ENCODE measurements at regions of chr20 and their contacts with region 1.

Region 1: GRCh38 chr20:63537525-63538203 is 488 bp upstream of the PTK6 start:
- DNase-seq: peak; percentile 98
- ATAC-seq: peak; percentile 97
- H3K4me3 Mint-ChIP-seq: peak overlapping the region; percentile 44
- H3K27ac Mint-ChIP-seq: peak overlapping the region; percentile 88
- H3K4me1 Mint-ChIP-seq: peaks cover 17% of the 10 kb centered on the region
- H3K27me3 Mint-ChIP-seq: no peaks in the 10 kb centered on the region
- CTCF ChIP-seq: peak; percentile 96

Region 2: GRCh38 chr20:63520504-63520933 is 17.1 kb before region 1 on chr20 and contains the start of gene PPDPF:
- CTCF ChIA-PET with region 1: interaction called, 9 read pairs
- POLR2A ChIA-PET with region 1: interaction called, 48 read pairs
- intact Hi-C with region 1: no loop called
- DNase-seq: peak; percentile 85
- ATAC-seq: peak; percentile 88
- H3K4me3 Mint-ChIP-seq: peak within 1 kb of the TSS; percentile 78
- H3K27ac Mint-ChIP-seq: peak within 1 kb of the TSS; percentile 77
- H3K4me1 Mint-ChIP-seq: peaks cover 11% of the 10 kb centered on the region
- H3K27me3 Mint-ChIP-seq: no peaks in the 10 kb centered on the region
- CTCF ChIP-seq: no peak
- total RNA-seq, gene PPDPF: 193 to 226 TPM

Region 3: GRCh38 chr20:63553933-63554290 is 16.2 kb after region 1 on chr20 and contains the start of gene FNDC11:
- CTCF ChIA-PET with region 1: interaction called, 10 read pairs
- POLR2A ChIA-PET with region 1: interaction called, 4 read pairs
- intact Hi-C with region 1: no loop called
- DNase-seq: peak; percentile 68
- ATAC-seq: peak; percentile 11
- H3K4me3 Mint-ChIP-seq: peak within 1 kb of the TSS; percentile 53
- H3K27ac Mint-ChIP-seq: peak within 1 kb of the TSS; percentile 70
- H3K4me1 Mint-ChIP-seq: peaks cover 11% of the 10 kb centered on the region
- H3K27me3 Mint-ChIP-seq: peaks cover 7% of the 10 kb centered on the region
- CTCF ChIP-seq: no peak
- total RNA-seq, gene FNDC11: 0.23 to 0.27 TPM

Region 4: DNA sequence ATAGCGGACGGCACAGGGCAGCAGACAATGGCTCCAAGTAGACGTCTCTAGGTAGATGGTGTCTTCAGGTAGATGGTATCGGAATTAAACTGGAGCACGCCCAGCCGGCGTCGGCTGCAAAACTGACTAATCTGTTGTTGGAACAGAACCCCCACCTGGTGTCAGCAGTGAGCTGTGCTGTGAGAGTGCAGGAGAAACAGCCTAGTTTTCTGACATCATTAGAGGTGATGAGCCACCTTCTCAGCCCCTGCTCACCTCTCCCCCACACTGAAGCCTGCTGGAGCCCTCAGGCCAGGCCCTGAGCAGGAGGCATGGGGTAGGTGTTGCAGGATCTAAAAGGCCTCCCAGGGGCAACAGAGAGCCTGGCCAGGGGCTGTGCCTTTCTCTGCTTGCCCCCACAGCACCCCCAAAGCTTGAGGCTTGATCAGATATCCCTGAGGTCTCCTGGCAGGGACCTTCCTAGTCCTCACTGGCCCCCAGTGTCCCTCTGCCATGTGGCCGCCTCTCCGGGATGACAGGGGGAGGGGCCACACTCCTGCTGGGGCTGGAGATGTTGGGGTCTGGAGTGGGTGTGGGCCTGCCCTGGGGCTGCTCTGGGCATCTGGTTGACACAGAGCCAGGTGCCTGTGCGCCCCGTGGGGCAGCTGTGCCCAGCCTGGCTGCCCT is 43.3 kb after region 1 on chr20:
- CTCF ChIA-PET with region 1: interaction called, 11 read pairs
- POLR2A ChIA-PET with region 1: no interaction called
- intact Hi-C with region 1: no loop called
- DNase-seq: peak; percentile 83
- ATAC-seq: peak; percentile 98
- H3K4me3 Mint-ChIP-seq: no peak overlapping the region
- H3K27ac Mint-ChIP-seq: no peak overlapping the region
- H3K4me1 Mint-ChIP-seq: no peaks in the 10 kb centered on the region
- H3K27me3 Mint-ChIP-seq: peaks cover 3% of the 10 kb centered on the region
- CTCF ChIP-seq: peak; percentile 48

Region 5: DNA sequence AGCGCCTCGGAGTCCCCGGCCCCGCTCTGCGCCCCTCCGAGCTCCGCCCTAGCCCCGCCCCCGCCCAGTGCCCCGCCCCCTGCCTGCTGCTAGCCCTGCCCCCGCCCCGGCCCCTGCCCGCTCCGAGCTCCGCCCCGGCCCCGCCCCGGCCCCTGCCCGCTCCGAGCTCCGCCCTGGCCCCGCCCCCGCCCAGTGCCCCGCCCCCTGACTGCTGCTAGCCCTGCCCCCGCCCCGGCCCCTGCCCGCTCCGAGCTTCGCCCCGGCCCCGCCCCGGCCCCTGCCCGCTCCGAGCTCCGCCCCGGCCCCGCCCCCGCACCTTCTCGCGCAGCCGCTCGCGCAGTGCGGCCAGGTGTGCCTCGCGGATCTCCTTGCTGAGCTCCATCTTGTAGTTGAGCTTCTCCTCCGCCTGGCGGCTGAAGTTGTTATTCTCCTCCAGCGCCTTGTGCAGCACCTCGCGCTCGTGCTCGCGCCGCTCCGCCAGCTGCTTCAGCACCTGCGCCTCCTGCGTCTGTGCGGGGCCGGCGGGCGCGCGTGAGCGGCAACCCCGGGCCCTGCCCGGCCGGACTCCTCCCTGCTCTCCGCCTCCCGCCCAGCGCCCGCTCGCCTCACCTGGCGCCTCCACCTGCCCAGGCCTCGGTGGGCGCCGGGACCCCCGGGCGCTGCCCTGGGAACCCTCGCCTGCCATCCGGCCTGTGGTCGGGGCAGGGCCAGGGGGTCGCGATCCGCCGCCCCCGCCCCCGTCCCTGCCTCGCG is 104.3 kb after region 1 on chr20:
- CTCF ChIA-PET with region 1: interaction called, 20 read pairs
- POLR2A ChIA-PET with region 1: no interaction called
- intact Hi-C with region 1: no loop called
- DNase-seq: peak; percentile 95
- ATAC-seq: peak; percentile 71
- H3K4me3 Mint-ChIP-seq: peak overlapping the region; percentile 71
- H3K27ac Mint-ChIP-seq: no peak overlapping the region
- H3K4me1 Mint-ChIP-seq: peaks cover 21% of the 10 kb centered on the region
- H3K27me3 Mint-ChIP-seq: no peaks in the 10 kb centered on the region
- CTCF ChIP-seq: peak; percentile 57

Region 6: GRCh38 chr20:63657937-63658748 is 120.5 kb after region 1 on chr20 and contains the start of gene RTEL1:
- CTCF ChIA-PET with region 1: interaction called, 10 read pairs
- POLR2A ChIA-PET with region 1: no interaction called
- intact Hi-C with region 1: no loop called
- DNase-seq: peak; percentile 89
- ATAC-seq: peak; percentile 80
- H3K4me3 Mint-ChIP-seq: peak within 1 kb of the TSS; percentile 96
- H3K27ac Mint-ChIP-seq: peak within 1 kb of the TSS; percentile 93
- H3K4me1 Mint-ChIP-seq: peaks cover 24% of the 10 kb centered on the region
- H3K27me3 Mint-ChIP-seq: no peaks in the 10 kb centered on the region
- CTCF ChIP-seq: no peak
- total RNA-seq, gene RTEL1: 37.4 to 39.1 TPM

Region 7: GRCh38 chr20:63707549-63708300 is 170.1 kb after region 1 on chr20 and contains the starts of genes ARFRP1 and ZGPAT:
- CTCF ChIA-PET with region 1: interaction called, 10 read pairs
- POLR2A ChIA-PET with region 1: no interaction called
- intact Hi-C with region 1: no loop called
- DNase-seq: peak; percentile 89
- ATAC-seq: peak; percentile 90
- H3K4me3 Mint-ChIP-seq: peak within 1 kb of the TSS; percentile 87
- H3K27ac Mint-ChIP-seq: peak within 1 kb of the TSS; percentile 77
- H3K4me1 Mint-ChIP-seq: peaks cover 41% of the 10 kb centered on the region
- H3K27me3 Mint-ChIP-seq: no peaks in the 10 kb centered on the region
- CTCF ChIP-seq: no peak
- total RNA-seq, gene ARFRP1: 41.7 to 44.2 TPM
- total RNA-seq, gene ZGPAT: 22.4 to 22.5 TPM

Region 8: GRCh38 chr20:63750807-63751470 is 213.3 kb after region 1 on chr20:
- CTCF ChIA-PET with region 1: no interaction called
- POLR2A ChIA-PET with region 1: no interaction called
- intact Hi-C with region 1: no loop called
- DNase-seq: peak; percentile 86
- ATAC-seq: peak; percentile 88
- H3K4me3 Mint-ChIP-seq: peak overlapping the region; percentile 63
- H3K27ac Mint-ChIP-seq: peak overlapping the region; percentile 89
- H3K4me1 Mint-ChIP-seq: peaks cover 21% of the 10 kb centered on the region
- H3K27me3 Mint-ChIP-seq: no peaks in the 10 kb centered on the region
- CTCF ChIP-seq: no peak

Measured in activated CD8-positive, alpha-beta T cell treated with anti-CD3 and anti-CD28 coated beads for 36 hours (primary cell).